Dendritic cell treated with granulocyte-macrophage colony-stimulating factor and Interleukin-4, amounts not matched to agents 40 ng/mL and 50 ng/mL, for 4 days (primary cell): ENCODE measurements at regions of chr16 and their contacts with region 1.

Region 1: GRCh38 chr16:79601931-79602627 is 1.5 kb upstream of the MAF start:
- H3K4me3 Mint-ChIP-seq: peak overlapping the region; percentile 95
- H3K27ac Mint-ChIP-seq: peak overlapping the region; percentile 94
- H3K4me1 Mint-ChIP-seq: peaks cover 39% of the 10 kb centered on the region
- H3K27me3 Mint-ChIP-seq: peaks cover 15% of the 10 kb centered on the region

Region 2: GRCh38 chr16:78705694-78706093 is 896.4 kb before region 1 on chr16:
- intact Hi-C with region 1: loop called (anchors 10 kb)
- H3K4me3 Mint-ChIP-seq: no peak overlapping the region
- H3K27ac Mint-ChIP-seq: no peak overlapping the region
- H3K4me1 Mint-ChIP-seq: no peaks in the 10 kb centered on the region
- H3K27me3 Mint-ChIP-seq: no peaks in the 10 kb centered on the region

Region 3: DNA sequence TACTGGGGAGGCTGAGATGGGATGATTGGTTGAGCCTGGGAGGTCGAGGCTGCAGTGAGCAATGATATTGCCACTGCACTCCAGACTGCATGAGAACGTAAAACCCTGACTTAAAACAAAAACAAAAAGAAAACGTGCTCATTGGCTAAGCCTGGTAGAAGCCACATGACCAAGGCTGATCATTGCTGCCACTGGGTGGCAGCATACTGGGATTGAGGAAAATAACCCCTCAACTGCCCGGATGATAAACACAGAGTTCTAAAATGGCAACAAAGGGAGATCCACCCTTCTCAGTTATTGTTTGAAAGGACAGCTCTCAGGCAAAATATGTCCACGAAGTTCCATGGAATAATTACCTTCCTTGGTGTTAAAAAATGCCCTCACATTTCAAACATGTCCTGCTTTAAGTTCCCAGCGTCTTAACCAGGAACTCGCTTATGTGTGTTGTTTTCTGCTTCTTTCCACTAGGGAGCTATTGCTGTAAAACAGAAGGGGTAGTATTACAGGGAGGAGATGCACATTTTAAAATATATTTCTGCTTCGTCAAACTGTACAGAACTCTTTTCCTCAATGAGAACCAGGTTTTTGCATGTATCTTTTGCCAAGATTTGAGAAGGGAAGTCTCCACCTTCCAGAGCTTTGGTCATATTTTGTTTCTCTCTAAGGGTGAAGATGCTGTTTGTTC is 676.9 kb before region 1 on chr16:
- intact Hi-C with region 1: loop called (anchors 1 kb)
- H3K4me3 Mint-ChIP-seq: no peak overlapping the region
- H3K27ac Mint-ChIP-seq: no peak overlapping the region
- H3K4me1 Mint-ChIP-seq: no peaks in the 10 kb centered on the region
- H3K27me3 Mint-ChIP-seq: peaks cover 11% of the 10 kb centered on the region

Region 4: DNA sequence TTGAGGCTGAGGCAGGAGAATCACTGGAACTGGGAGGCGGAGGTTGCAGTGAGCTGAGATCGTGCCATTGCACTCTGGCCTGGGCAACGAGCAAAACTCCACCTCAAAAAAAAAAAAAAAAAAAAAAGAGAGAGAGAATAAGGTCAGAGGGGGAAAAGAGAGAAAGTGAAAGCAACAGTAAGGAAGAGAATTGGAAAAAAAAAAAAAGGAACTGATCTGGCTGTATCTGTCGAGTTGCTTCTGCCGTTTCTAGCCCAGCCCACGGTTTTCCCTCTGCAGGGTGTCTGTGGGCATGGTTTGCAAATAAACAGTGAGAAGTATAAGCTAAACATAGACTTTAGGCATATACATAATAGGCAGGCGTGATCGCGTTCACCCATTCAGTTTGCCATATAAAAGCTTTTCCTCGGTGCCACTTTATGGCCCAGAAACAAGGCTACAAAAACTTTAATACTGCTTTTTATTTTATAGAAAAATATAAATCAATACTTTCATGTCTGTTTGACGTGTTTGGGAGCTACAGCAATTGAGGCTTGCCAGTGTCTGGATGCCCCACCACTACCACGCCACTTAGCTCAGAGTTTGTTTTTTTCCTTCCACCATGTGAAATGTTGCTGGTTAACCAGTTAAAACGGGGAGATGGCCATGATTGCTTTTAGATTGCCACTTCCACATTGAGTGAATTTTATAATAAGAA is 438.2 kb before region 1 on chr16:
- intact Hi-C with region 1: loop called (anchors 5 kb)
- H3K4me3 Mint-ChIP-seq: peak overlapping the region; percentile 79
- H3K27ac Mint-ChIP-seq: peak overlapping the region; percentile 55
- H3K4me1 Mint-ChIP-seq: peaks cover 43% of the 10 kb centered on the region
- H3K27me3 Mint-ChIP-seq: peaks cover 11% of the 10 kb centered on the region

Region 5: DNA sequence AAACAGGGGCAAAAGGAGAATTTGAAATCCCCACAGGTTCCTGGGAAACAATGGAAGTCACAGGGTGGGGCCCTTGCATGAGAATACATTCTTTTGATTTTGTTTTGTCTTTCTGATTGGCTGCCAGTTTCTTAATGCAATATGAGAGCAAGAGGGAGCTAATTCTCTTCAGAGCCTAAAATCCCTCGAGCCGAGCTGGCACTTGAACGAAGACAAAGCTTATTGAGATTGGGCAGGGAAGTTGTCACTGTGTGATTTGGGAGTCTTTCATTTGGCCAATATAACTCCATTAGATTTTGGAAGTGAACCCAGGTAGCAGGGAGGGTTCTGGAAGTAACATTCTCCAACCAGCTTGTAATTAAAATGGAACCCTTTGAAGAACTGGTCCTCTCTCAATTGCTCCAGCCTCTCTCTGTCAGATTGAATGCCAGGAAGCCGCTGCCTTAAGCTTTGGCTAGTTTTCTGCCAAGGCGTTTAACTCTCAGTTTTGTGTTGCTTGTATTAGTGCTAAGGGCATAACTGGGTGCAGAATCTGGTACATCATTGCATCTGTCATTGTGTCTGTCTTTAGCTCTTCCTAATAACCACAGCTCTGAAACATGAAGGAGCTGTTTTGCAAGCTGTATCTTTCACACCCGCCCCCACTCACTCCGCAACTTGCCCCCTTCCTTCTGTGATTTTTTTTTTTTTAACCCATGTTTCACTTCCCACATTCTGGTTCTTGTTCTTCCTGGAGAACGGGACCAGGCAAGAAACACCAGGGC is 273.5 kb before region 1 on chr16:
- intact Hi-C with region 1: loop called (anchors 2 kb)
- H3K4me3 Mint-ChIP-seq: peak overlapping the region; percentile 49
- H3K27ac Mint-ChIP-seq: peak overlapping the region; percentile 92
- H3K4me1 Mint-ChIP-seq: peaks cover 70% of the 10 kb centered on the region
- H3K27me3 Mint-ChIP-seq: peaks cover 1% of the 10 kb centered on the region

Region 6: GRCh38 chr16:79451196-79451816 is 150.8 kb before region 1 on chr16:
- intact Hi-C with region 1: loop called (anchors 1 kb)
- H3K4me3 Mint-ChIP-seq: no peak overlapping the region
- H3K27ac Mint-ChIP-seq: peak overlapping the region; percentile 81
- H3K4me1 Mint-ChIP-seq: peaks cover 38% of the 10 kb centered on the region
- H3K27me3 Mint-ChIP-seq: peaks cover 3% of the 10 kb centered on the region

Region 7: DNA sequence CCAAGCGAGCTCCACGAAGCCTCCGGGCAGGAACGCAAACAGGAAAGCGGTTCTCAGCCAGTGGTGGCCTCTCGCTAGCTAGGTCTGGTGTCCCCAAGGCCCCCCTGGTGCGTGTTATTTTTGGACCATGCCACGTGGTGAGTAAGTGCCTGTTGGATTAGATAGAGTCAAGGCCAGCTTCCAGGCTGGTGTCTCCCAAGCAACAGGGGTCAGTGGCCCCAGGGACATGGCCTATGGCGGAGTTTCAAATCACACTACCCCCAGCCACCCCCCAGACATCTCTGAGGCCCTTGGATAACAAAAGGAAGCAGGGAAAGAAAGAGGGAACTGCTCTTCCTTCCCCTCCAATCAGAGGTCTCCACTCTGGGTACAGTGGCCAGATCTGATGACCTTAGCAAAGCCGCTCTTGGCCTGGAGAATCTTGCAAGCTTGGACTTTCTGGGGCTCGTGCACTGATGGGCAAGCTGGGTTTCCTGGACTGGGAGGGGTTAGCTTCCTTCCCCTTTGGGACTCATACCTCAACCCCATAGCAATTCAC is 59.8 kb before region 1 on chr16:
- intact Hi-C with region 1: no loop called
- H3K4me3 Mint-ChIP-seq: no peak overlapping the region
- H3K27ac Mint-ChIP-seq: peak overlapping the region; percentile 85
- H3K4me1 Mint-ChIP-seq: peaks cover 27% of the 10 kb centered on the region
- H3K27me3 Mint-ChIP-seq: peaks cover 30% of the 10 kb centered on the region

Region 8: GRCh38 chr16:80466024-80466987 is 864.2 kb after region 1 on chr16:
- intact Hi-C with region 1: loop called (anchors 10 kb)
- H3K4me3 Mint-ChIP-seq: no peak overlapping the region
- H3K27ac Mint-ChIP-seq: no peak overlapping the region
- H3K4me1 Mint-ChIP-seq: no peaks in the 10 kb centered on the region
- H3K27me3 Mint-ChIP-seq: no peaks in the 10 kb centered on the region